AG04450 (cell line): ENCODE measurements at regions of chr16 and their contacts with region 1.

Region 1: DNA sequence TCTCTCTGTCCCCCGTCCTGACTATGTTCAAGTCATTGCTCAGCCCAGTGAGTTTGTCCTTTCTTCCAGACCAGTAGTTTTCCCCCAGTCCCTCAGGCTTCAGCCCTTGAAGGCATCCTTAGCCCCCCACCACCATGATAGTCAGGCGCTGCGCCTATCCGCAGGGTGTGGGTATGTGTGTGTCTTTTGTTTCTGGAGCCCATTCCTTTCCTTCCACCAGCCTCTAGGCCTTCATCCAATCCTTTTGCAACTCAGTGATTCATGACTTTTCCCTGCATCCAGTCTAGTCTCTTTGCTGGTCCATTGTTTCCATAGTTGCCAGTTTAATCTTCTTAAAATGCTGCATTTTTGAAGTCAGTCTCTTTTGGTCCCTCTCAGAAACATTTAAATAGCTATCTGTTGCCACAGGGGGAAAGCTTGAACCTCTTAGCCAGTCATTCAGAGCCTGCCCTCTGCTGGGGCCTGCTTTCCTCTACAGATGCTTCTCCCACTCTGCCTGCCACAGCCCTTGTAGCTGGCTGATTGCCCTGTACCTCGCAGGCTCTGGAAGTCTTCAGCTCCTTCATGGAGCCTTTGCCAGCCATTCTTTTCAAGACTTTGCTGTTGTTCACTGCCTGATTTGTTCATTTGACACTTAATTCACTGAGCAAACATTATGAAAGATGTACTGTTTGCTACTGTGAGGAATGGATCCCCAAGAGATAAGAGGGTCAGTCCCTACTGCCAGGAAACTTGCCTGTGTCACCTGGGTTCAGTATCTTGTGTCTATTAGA is 55.9 kb upstream of the ADCY7 start:
- DNase-seq: peak; percentile 59
- H3K4me3 ChIP-seq: no peak overlapping the region
- H3K27ac ChIP-seq: no peak overlapping the region
- H3K27me3 ChIP-seq: no peaks in the 10 kb centered on the region
- CTCF ChIP-seq: peak; percentile 86

Region 2: GRCh38 chr16:50065624-50066481 is 144.6 kb before region 1 on chr16 and contains the start of gene HEATR3:
- CTCF ChIA-PET with region 1: interaction called, 152 read pairs
- POLR2A ChIA-PET with region 1: interaction called, 5 read pairs
- DNase-seq: peak; percentile 85
- H3K4me3 ChIP-seq: peak within 1 kb of the TSS; percentile 99
- H3K27ac ChIP-seq: peak within 1 kb of the TSS; percentile 84
- H3K27me3 ChIP-seq: no peaks in the 10 kb centered on the region
- CTCF ChIP-seq: no peak
- polyA plus RNA-seq, gene HEATR3: 15.0 and 17.1 TPM in 2 replicates

Region 3: GRCh38 chr16:50152807-50153452 is 57.5 kb before region 1 on chr16 and contains the start of gene TENT4B:
- CTCF ChIA-PET with region 1: interaction called, 28 read pairs
- POLR2A ChIA-PET with region 1: no interaction called
- DNase-seq: peak; percentile 49
- H3K4me3 ChIP-seq: peak within 1 kb of the TSS; percentile 80
- H3K27ac ChIP-seq: peak within 1 kb of the TSS; percentile 89
- H3K27me3 ChIP-seq: no peaks in the 10 kb centered on the region
- CTCF ChIP-seq: no peak
- polyA plus RNA-seq, gene TENT4B: 6.0 and 8.9 TPM in 2 replicates

Region 4: DNA sequence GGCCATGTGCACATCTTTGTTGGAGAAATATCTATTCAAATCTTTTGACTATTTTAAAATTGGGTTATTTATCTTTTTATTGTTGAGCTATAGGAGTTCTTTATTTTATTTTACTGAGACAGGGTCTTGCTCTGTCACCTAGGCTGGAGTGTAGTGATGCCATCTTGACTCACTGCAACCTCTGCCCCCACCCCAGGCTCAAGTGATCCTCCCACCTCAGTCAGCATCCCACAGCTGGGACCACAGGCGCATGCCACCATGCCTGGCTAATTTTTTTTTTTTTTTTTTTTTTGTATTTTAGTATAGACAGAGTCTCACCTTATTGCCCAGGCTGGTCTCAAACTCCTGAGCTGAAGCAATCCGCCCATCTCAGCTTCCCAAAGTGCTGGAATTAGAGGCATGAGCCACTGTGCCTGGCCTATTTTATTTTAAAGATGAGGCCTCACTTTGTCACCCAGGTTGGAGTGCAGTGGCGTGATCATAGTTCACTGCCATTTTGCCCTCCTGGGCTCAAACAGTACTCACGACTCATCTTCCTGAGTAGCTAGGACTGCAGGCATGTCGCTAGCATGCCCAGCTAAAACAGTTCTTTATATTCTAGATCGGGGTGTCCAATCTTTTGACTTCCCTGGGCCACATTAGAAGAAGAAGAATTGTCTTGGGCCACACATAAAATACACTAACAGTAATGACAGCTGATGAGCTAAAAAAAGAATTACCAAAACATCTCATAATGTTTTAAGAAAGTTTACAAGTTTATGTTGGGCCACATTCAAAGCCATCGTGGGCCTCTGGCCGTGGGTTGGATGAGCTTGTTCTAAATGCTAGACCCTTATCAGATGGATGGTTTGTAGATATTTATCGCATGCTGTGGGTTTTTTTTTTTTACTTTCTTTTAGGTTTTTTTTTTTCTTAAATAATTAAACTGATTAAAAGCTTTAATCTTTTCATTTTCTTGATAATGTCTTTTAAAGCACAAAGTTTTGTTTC is 43.6 kb before region 1 on chr16:
- CTCF ChIA-PET with region 1: interaction called, 15 read pairs
- POLR2A ChIA-PET with region 1: no interaction called
- DNase-seq: no peak
- H3K4me3 ChIP-seq: no peak overlapping the region
- H3K27ac ChIP-seq: no peak overlapping the region
- H3K27me3 ChIP-seq: no peaks in the 10 kb centered on the region
- CTCF ChIP-seq: no peak

Region 5: GRCh38 chr16:50235581-50235980 is 25.1 kb after region 1 on chr16:
- CTCF ChIA-PET with region 1: interaction called, 10 read pairs
- POLR2A ChIA-PET with region 1: interaction called, 7 read pairs
- DNase-seq: no peak
- H3K4me3 ChIP-seq: no peak overlapping the region
- H3K27ac ChIP-seq: no peak overlapping the region
- H3K27me3 ChIP-seq: peaks cover 3% of the 10 kb centered on the region
- CTCF ChIP-seq: no peak

Region 6: GRCh38 chr16:50338371-50339231 is 128.1 kb after region 1 on chr16:
- CTCF ChIA-PET with region 1: interaction called, 13 read pairs
- POLR2A ChIA-PET with region 1: interaction called, 6 read pairs
- DNase-seq: no peak
- H3K4me3 ChIP-seq: no peak overlapping the region
- H3K27ac ChIP-seq: no peak overlapping the region
- H3K27me3 ChIP-seq: no peaks in the 10 kb centered on the region
- CTCF ChIP-seq: no peak